AG04450 (cell line): ENCODE measurements at regions of chr15 and their contacts with region 1.

Region 1: GRCh38 chr15:35719964-35720507 is 174.1 kb upstream of the DPH6 start:
- DNase-seq: no peak
- H3K4me3 ChIP-seq: no peak overlapping the region
- H3K27ac ChIP-seq: no peak overlapping the region
- H3K27me3 ChIP-seq: no peaks in the 10 kb centered on the region
- CTCF ChIP-seq: no peak

Region 2: DNA sequence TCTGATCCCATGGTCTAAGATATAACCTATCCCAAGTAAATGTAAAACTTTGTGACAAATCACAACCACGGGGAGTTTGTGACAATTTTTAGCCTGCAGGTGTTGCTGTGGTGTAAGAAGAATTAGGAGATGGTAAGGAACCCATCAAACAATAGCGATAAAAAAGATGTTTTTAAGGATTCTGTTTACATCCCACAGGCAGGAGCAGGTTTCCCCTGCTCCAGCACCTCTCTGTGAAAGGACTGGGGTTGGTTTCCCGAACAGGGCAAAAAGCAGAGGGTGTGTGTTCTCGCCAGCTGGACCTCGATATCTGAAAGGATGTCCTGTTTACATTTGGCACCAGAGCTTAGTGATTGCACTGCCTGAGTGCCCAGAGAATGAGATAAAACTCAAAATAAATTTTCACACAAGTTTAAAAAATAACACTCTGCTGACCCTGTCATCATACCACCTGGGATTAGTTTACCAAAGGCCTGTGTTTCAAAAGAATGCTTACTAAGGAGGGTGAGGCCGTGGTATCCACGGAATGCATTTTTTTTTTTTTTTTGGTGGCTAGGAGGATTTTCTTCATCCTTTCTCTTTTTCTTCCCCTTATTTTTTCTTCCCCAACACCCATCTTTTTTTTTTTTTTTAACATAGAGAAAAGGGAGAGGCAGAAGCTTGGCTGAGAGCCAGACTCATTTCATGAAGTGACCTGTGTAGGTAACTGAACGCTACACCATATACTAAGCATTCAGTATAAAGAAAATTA is 22.3 kb before region 1 on chr15:
- CTCF ChIA-PET with region 1: no interaction called
- POLR2A ChIA-PET with region 1: interaction called, 12 read pairs
- DNase-seq: peak; percentile 62
- H3K4me3 ChIP-seq: no peak overlapping the region
- H3K27ac ChIP-seq: peak overlapping the region; percentile 87
- H3K27me3 ChIP-seq: no peaks in the 10 kb centered on the region
- CTCF ChIP-seq: no peak